Sigmoid colon (tissue), 7 donors: ENCODE measurements at regions of chr1 and their contacts with region 1.

Region 1: DNA sequence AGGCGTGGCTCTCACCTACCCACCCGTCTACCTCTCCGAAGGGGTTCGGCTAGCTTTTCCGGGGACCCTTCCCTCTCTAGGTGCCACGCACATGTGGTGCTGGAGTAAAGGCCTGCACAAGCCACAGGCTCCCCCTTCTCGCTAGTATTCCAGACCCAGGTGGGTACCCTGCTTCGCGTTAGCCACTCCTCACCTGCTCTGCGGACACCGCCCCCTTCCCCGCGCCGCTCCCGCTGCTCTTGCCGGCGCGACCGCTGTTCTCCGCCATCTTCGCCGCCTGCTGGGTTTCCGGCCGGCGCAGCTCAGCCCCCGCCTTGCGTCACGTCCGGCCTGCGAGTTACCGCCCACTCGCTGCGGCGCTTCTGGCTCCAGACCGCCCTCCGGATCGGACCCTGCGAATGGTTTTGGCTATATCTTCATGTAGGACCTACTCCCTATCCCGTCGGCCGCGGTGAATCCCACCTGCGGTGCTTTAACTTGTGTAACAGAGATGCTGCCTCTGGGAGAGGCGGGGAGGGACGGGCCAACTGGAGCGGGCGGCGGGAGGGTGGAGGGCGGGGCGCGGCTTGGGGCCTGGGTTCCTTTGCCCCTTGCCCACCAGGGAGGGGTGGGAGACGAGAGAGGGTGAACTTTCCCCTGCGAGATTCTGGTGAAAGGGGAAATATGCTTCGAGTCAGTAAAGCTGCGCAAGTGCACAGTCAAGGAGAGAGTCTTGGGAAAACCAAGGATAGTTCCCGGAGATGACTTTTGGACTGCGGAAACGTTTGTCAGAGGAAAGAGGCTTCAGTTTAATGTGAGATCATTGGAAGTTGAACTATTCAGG is at the starts of genes NIT1 and PFDN2:
- DNase-seq: peak; percentile 94
- H3K4me3 ChIP-seq: peak within 1 kb of the TSS; percentile 88 to 100 (median 94)
- H3K27ac ChIP-seq: peak within 1 kb of the TSS; percentile 89 to 97 (median 94)
- H3K4me1 ChIP-seq: peaks cover 0 to 69% (median 51%) of the 10 kb centered on the region in 4 donors
- H3K27me3 ChIP-seq: no peaks in the 10 kb centered on the region
- CTCF ChIP-seq: no peak
- EP300 ChIP-seq: peak in 1 of 4 donors; percentile 3
- POLR2A ChIP-seq: peak; percentile 92 to 93
- total RNA-seq, gene NIT1: 24.4 to 39.6 (median 33.1) TPM
- total RNA-seq, gene PFDN2: 40.7 to 63.4 (median 45.9) TPM

Region 2: DNA sequence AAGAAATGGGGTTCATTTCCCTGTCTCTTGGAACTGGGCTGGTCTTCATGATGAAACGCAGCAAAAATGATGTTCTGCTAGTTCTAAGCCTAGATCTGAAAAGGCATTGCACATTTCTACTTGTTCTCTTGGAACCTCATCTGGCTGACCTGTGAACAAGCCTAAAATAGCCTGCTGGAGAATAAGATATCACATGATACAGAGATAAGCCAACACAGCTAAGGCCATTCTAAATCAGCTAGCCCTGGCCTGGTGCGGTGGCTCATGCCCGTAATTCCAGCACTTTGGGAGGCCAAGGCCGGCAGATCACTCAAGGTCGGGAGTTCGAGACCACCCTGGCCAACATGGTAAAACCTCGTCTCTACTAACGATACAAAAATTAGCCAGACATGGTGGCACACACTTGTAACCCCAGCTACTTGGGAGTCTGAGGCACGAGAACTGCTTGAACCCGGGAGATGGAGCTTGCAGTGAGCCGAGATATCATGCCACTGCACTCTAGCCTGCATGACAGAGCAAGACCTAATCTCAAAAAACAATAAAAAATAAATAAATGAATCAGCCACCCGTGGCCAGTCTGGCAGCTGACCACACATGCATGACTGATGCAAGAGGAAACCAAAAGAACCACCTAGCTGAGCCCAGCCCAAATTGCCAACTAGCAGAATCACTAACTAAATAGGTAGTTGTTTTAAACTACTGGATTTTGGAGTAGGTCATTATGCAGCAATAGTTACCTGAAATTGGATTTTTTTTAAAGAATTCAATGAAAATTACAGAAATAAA is 273.3 kb before region 1 on chr1:
- intact Hi-C with region 1: no loop called
- DNase-seq: no peak
- H3K4me3 ChIP-seq: no peak overlapping the region
- H3K27ac ChIP-seq: peak overlapping the region in 1 of 4 donors; percentile 63
- H3K4me1 ChIP-seq: peaks cover 0 to 25% (median 5%) of the 10 kb centered on the region in 4 donors
- H3K27me3 ChIP-seq: no peaks in the 10 kb centered on the region
- CTCF ChIP-seq: no peak
- EP300 ChIP-seq: no peak
- POLR2A ChIP-seq: no peak

Region 3: DNA sequence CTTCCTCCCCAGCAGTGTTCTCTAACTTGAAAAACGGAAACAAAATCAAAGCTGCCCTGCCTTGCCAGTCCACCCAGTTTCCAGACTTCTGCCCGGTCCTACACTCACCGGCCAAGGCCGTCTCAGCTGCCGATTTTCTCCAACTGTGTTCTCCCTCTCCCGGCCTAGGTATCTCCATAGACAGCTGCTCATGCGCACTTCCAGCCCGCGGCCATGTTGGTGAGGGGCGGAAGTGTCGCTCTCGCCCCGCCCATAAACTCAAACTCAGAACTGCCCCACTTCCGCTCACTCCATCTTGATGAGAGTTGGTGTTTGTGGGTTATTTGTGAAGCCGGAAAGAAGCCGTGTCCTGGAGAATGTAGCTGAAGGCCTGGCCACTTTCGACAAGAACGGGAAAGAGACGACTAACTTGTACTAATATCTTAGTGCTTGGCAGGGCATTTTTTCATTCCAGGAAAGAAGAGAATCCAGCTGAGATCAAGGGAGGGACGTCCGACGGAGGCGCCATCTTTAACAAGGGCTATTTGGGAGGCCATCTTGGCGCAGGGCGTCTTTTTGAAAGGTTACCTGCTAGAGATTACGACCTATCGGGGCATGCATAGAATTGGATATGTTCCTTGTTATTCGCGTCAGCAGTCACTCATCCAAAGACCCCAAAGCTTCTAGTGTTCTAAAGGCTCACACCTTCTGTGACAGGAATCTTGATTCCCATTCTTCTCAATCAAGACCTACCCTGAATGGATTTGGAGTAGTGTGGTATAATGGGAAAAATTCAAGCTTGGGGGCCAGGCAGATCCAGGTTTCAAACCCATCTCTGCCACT is 72.0 kb before region 1 on chr1 and contains the start of gene USF1:
- intact Hi-C with region 1: loop called (anchors 5 kb)
- DNase-seq: peak; percentile 96
- H3K4me3 ChIP-seq: peak within 1 kb of the TSS; percentile 74 to 88 (median 81)
- H3K27ac ChIP-seq: peak within 1 kb of the TSS; percentile 90 to 96 (median 94)
- H3K4me1 ChIP-seq: peaks cover 0 to 20% (median 15%) of the 10 kb centered on the region in 4 donors
- H3K27me3 ChIP-seq: no peaks in the 10 kb centered on the region
- CTCF ChIP-seq: no peak
- EP300 ChIP-seq: no peak
- POLR2A ChIP-seq: peak; percentile 48 to 61
- total RNA-seq, gene USF1: 54.8 to 76.2 (median 62.5) TPM

Region 4: DNA sequence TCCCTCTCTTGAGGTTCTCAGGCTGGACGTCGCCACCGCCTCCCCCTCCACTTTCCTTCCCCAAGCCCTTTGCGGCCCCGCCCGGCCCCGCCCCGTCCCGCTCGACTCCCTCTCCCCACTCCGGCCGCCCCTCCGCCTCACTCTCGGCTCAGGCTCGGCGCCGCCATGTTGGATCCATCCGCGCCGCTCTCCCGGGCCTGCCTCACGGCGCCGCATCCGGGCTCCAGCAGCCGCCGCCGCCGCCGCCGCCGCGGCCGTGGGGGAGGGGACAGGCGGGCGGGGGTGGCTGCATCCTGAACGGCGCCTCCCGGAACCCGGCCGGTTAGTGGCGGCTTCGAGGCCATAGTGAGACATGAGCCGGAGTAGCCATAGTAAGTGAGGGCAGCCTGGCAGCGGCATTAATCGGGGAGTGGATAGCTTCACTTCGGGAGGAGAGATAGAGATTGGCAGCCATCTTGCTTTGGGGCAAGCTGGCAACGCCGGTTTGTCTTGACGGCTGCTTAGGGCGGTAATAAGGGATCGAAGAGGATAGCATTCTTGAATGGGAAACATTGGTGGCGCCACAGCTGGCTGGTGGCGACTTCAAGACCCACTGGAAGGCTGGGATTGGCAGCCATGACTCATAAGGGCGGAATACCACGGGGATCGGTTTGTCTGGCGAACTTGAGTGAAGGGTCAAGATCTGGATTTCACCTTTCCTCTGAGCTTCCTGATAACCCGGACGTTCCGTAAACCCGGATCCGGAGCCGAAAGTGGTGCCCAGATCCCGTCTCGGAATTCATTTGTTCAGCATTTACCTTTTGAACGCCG is 14.6 kb after region 1 on chr1 and contains the start of gene DEDD:
- intact Hi-C with region 1: loop called (anchors 2 kb)
- DNase-seq: peak; percentile 98
- H3K4me3 ChIP-seq: peak within 1 kb of the TSS; percentile 69 to 83 (median 76)
- H3K27ac ChIP-seq: peak within 1 kb of the TSS; percentile 90 to 97 (median 92)
- H3K4me1 ChIP-seq: peaks cover 0 to 52% (median 41%) of the 10 kb centered on the region in 4 donors
- H3K27me3 ChIP-seq: no peaks in the 10 kb centered on the region
- CTCF ChIP-seq: no peak
- EP300 ChIP-seq: peak in 1 of 4 donors; percentile 56
- POLR2A ChIP-seq: no peak
- total RNA-seq, gene DEDD: 27.7 to 34.2 (median 30.2) TPM

Region 5: DNA sequence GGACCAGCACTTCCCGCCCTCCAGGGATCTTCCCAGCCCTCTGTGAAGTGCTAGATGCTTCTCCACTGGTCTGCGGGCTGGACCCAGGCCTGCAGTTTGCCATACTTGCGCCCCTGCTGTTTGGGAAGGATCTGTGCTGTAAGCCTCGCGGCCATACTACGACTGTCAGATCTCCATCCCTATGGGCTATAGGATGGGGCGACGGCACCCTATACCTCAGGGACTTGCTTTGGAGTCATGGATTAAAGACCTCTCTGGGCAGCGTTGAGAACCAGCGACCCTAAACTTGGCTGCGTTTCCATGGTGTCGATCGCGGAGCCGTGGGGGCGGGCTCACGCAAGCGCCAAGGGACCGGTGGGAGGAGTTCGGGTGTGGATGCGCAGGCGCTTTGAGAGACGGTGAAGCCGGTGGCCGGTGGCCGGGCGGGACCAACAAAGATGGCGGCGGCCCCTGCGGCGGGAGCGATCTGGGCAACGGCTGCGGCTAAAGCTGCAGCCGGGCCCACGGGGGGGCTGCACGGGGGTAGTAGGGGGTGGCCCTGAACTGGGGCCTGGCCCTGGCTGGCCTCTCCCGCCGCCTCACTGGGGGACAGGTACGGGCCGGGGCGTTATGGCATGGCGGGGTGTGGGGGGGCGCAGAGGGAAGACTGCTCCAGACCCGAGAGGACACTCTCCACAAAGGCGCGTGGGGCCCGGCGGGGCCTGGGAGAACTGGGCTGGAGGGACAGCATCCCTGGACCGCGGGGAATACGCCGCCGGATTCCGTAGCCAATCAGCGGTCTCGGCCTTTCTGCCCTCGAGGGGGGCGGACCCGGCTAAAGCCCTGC is 41.3 kb after region 1 on chr1 and contains the start of gene USP21:
- intact Hi-C with region 1: loop called (anchors 5 kb)
- DNase-seq: peak; percentile 96
- H3K4me3 ChIP-seq: peak within 1 kb of the TSS; percentile 82 to 97 (median 93)
- H3K27ac ChIP-seq: peak within 1 kb of the TSS; percentile 86 to 93 (median 90)
- H3K4me1 ChIP-seq: peaks cover 0 to 42% (median 39%) of the 10 kb centered on the region in 4 donors
- H3K27me3 ChIP-seq: no peaks in the 10 kb centered on the region
- CTCF ChIP-seq: peak in 2 of 4 experiments; percentile 17 to 32
- EP300 ChIP-seq: no peak
- POLR2A ChIP-seq: peak; percentile 47 to 52
- total RNA-seq, gene USP21: 11.4 to 24.1 (median 13.1) TPM

Region 6: DNA sequence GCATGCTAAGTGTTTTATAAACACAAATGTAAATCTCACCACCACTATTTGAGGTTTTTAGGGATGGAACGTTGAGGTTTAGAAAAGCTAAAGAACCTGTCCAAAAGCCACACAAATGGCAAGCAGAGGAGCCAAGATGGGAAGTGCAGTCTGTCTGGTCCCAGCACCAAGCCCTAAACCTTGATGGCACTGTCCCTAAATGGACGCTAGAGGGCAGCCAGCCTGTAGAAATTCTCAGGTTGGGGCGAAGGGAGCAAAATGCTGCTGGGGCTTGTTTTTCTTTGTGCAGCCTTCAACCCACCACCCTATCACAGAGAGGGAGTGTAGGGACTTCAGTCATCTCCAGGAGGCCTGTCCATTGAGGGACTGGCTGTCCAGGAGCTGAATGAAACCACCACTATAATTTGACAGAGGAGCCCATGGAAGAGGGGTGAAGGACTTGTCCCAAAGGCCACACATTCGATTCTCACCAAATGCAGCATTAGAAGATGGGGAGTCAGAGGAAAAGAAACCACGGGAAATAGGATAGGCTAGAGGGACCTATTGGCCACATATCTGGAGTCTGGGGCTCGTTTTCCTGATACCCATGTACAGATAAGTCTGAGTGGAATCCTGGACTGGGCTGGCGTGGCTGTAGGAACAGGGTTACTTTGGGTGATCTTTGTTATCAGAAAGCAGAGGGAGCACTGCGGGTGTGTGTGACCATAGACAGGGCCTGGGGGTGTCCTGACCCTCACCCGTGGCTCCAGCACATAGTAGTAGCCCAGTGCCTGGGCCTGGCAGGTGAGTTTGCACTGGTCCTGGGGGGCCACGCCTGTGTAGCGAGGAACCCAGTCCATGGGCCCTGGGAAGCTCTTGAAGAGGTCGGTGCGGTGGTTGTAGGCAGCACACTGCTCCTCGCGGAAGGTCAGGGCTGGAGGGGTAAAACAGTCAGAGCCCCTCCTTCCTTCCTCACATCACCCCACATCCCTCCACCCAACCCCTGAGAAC is 74.8 kb after region 1 on chr1:
- intact Hi-C with region 1: no loop called
- DNase-seq: peak; percentile 85
- H3K4me3 ChIP-seq: no peak overlapping the region
- H3K27ac ChIP-seq: peak overlapping the region in 3 of 4 donors; percentile 1 to 15 (median 1)
- H3K4me1 ChIP-seq: peaks cover 0 to 38% (median 21%) of the 10 kb centered on the region in 4 donors
- H3K27me3 ChIP-seq: no peaks in the 10 kb centered on the region
- CTCF ChIP-seq: peak; percentile 61 to 85 (median 73)
- EP300 ChIP-seq: no peak
- POLR2A ChIP-seq: no peak

Region 7: DNA sequence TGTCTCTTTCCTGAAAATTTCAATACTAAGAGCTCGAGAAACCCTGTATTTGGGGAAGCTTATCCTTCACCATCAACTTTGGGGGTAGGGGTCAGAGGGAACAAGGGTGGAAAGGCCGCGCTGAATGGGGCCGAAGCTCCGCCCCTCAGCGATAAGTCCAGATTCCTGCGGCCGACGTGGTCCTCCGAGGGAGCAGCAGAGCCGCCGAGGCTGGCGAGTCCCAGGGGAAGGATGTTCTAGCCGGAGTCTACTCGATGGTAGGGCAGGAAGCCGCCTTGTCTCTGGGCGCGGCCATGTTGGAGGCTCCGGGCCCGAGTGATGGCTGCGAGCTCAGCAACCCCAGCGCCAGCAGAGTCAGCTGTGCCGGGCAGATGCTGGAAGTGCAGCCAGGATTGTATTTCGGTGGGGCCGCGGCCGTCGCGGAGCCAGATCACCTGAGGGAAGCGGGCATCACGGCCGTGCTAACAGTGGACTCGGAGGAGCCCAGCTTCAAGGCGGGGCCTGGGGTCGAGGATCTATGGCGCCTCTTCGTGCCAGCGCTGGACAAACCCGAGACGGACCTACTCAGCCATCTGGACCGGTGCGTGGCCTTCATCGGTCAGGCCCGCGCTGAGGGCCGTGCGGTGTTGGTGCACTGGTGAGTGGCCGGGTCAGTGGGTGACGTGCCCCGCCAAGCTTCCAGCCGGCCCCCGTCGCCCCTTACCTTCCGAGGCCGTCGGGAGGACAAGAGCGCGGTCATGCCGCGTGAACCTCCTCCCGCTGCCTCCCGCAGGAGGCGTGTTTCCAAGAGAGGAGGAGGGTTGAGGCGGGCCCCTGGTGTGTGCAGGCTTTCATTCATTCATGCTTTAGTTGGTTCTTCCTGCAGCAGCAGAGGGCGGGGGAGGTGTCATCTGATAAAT is 631.8 kb after region 1 on chr1 and contains the start of gene DUSP12:
- intact Hi-C with region 1: no loop called
- DNase-seq: peak; percentile 96
- H3K4me3 ChIP-seq: peak within 1 kb of the TSS; percentile 74 to 94 (median 74)
- H3K27ac ChIP-seq: peak within 1 kb of the TSS; percentile 83 to 94 (median 87)
- H3K4me1 ChIP-seq: peaks cover 0 to 25% (median 12%) of the 10 kb centered on the region in 4 donors
- H3K27me3 ChIP-seq: no peaks in the 10 kb centered on the region
- CTCF ChIP-seq: no peak
- EP300 ChIP-seq: no peak
- POLR2A ChIP-seq: no peak
- total RNA-seq, gene DUSP12: 12.7 to 40.3 (median 24.1) TPM